BJ (cell line): ENCODE measurements at regions of chr7 and their contacts with region 1.

Region 1: GRCh38 chr7:131859147-131859821 is 302.9 kb upstream of the PODXL start:
- DNase-seq: peak; percentile 16
- H3K4me3 ChIP-seq: no peak overlapping the region
- H3K27me3 ChIP-seq: 0 out of 2 replicates have a peak, but pooled peaks cover 3% of the 10 kb centered on the region
- CTCF ChIP-seq: peak; percentile 95

Region 2: DNA sequence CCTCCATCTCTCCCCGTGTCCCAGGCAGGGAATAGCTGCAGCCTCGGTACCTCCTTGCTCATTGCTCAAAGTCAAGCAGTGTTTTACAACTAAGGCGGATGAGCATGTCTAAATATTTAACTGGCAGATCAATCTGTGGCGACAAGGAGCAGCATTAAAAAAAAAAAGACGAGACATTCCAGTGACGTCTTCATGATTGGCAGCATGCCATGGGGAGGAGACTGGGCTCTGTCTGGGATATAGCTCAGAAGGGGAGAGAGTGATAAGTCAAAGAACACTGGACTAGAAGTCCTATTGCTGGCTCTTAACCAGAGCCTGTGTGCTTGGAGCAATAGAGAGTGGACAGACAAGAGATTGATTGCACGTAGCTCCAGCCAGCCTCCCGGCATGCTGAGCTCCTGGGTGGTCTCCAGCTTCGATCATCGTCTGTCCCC is 15.4 kb before region 1 on chr7:
- CTCF ChIA-PET with region 1: interaction called, 30 read pairs
- POLR2A ChIA-PET with region 1: no interaction called
- DNase-seq: no peak
- H3K4me3 ChIP-seq: no peak overlapping the region
- H3K27me3 ChIP-seq: no peaks in the 10 kb centered on the region
- CTCF ChIP-seq: no peak

Region 3: DNA sequence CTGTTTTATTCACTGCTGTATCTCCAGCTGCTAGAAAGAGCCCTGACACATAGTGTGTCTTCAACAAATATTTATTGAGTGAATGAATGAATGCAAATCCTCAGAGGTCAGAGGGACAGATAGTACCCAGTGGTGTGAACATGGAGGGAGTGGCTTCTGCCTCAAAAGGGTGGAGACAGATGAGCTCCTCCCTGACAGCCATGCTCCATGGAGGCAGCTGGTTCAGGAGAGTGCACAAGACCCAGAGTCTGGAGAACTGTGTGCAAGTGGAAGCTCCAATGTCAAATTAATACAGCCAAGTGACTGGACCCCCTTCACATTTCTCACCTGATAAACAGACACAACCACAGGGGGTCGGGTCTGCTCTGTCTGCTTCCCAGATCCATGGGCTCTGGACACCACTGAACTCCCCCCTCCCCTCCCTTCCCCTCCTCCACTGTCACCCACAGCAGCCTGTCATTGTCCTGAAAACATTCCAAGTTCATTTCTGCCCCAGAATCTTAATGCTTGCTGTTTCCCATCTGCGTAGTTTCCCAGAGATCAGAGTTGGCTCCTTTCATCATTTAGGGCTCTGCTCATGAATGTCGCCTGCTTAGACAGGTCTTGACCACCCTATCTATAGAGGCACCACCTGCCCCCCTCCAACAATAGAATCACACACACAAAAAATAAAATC is 10.0 kb after region 1 on chr7:
- CTCF ChIA-PET with region 1: interaction called, 17 read pairs
- POLR2A ChIA-PET with region 1: no interaction called
- DNase-seq: no peak
- H3K4me3 ChIP-seq: no peak overlapping the region
- H3K27me3 ChIP-seq: peaks cover 2% of the 10 kb centered on the region; the same call in 1 of the 2 replicates
- CTCF ChIP-seq: no peak

Region 4: DNA sequence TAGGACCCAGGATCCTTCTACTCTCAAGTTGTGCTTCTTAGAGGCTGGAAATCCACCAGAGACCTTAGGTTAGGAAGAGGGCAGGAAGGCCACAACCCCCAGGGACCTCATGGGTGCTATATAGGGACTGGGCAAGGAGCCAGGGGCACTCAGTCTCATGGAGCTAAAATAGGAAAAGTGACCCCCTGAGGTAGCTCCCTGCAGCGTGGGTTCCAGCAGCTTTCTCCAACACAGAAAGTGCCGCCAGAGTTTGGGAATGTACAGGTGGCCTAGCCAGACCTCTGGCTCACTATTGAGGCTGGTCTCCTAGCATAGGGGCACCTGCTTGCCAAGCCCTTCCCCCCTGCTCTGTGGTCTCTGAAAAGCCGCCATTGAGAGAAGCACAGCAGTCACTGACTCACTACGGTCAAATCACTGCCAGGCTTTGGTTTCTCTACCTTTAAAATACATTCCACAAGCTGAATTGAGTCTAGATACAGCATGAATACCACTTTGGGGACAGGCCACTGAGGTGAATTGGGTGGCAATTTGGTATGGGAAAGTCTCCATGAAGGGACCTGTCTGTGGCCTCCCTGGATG is 30.4 kb after region 1 on chr7:
- CTCF ChIA-PET with region 1: interaction called, 10 read pairs
- POLR2A ChIA-PET with region 1: no interaction called
- DNase-seq: no peak
- H3K4me3 ChIP-seq: no peak overlapping the region
- H3K27me3 ChIP-seq: no peaks in the 10 kb centered on the region
- CTCF ChIP-seq: no peak

Region 5: GRCh38 chr7:131909151-131909768 is 50.0 kb after region 1 on chr7:
- CTCF ChIA-PET with region 1: interaction called, 11 read pairs
- POLR2A ChIA-PET with region 1: no interaction called
- DNase-seq: no peak
- H3K4me3 ChIP-seq: no peak overlapping the region
- H3K27me3 ChIP-seq: peaks cover 16% of the 10 kb centered on the region
- CTCF ChIP-seq: no peak

Region 6: GRCh38 chr7:131945313-131945911 is 86.1 kb after region 1 on chr7:
- CTCF ChIA-PET with region 1: interaction called, 10 read pairs
- POLR2A ChIA-PET with region 1: no interaction called
- DNase-seq: no peak
- H3K4me3 ChIP-seq: no peak overlapping the region
- H3K27me3 ChIP-seq: peaks cover 7% of the 10 kb centered on the region
- CTCF ChIP-seq: peak; percentile 92

Region 7: GRCh38 chr7:132049462-132050304 is 190.4 kb after region 1 on chr7:
- CTCF ChIA-PET with region 1: interaction called, 24 read pairs
- POLR2A ChIA-PET with region 1: no interaction called
- DNase-seq: no peak
- H3K4me3 ChIP-seq: no peak overlapping the region
- H3K27me3 ChIP-seq: peaks cover 4% of the 10 kb centered on the region; the same call in 1 of the 2 replicates
- CTCF ChIP-seq: peak; percentile 75

Region 8: DNA sequence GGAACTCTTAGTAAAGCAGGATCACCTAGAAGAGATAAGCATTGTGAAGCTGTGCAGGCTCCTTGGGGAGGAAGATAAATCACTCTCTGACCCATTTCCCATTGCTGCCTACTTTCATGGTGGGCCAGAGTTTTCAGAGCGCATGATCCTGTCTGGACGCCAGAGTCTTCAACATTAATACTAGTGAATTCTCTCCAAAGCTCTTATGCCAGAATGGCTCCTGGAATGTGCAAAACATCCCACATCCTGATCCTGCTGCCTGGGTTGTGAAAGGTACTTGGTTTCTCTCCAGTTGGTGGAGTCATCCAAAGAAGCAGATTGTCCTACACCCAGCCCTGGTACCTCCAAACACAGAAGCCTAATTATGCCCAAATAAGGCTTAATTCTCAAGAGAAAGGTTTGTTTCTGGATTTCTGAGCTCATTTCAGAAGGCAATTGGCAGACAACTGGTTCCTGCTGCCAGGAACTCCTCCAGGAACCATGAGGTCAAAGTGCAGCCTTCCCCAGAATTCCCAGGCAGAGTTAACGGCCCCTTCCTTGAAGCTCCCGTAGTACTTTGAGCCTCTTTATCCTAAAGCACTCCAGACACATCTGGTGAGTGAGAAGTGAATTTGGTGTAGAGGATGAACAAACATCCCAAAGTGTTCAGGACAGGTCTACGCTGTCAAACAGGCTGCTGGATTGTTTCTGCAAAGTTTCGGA is 221.8 kb after region 1 on chr7:
- CTCF ChIA-PET with region 1: no interaction called
- POLR2A ChIA-PET with region 1: no interaction called
- DNase-seq: no peak
- H3K4me3 ChIP-seq: no peak overlapping the region
- H3K27me3 ChIP-seq: peaks cover 2% of the 10 kb centered on the region
- CTCF ChIP-seq: no peak

Region 9: GRCh38 chr7:132298790-132299189 is 439.5 kb after region 1 on chr7:
- CTCF ChIA-PET with region 1: no interaction called
- POLR2A ChIA-PET with region 1: no interaction called
- DNase-seq: no peak
- H3K4me3 ChIP-seq: no peak overlapping the region
- H3K27me3 ChIP-seq: no peaks in the 10 kb centered on the region
- CTCF ChIP-seq: no peak